ENCODE measurements at regions of chr10 and their contacts with region 1.

Region 1: GRCh38 chr10:38010119-38010903 is at the start of gene ZNF33A:
- DNase-seq: peak; percentile 94 to 96
- H3K4me3 ChIP-seq: peak within 1 kb of the TSS; percentile 50
- H3K4me3 Mint-ChIP-seq: peak within 1 kb of the TSS; percentile 88
- H3K27ac Mint-ChIP-seq: peak within 1 kb of the TSS; percentile 97
- H3K4me1 ChIP-seq: no peaks in the 10 kb centered on the region
- H3K4me1 Mint-ChIP-seq: peaks cover 7% of the 10 kb centered on the region
- H3K27me3 ChIP-seq: no peaks in the 10 kb centered on the region
- H3K27me3 Mint-ChIP-seq: no peaks in the 10 kb centered on the region
- CTCF ChIP-seq: peak in 1 of 2 experiments; percentile 30
- total RNA-seq, gene ZNF33A: 33.9 and 36.3 TPM in 2 replicates

Region 2: DNA sequence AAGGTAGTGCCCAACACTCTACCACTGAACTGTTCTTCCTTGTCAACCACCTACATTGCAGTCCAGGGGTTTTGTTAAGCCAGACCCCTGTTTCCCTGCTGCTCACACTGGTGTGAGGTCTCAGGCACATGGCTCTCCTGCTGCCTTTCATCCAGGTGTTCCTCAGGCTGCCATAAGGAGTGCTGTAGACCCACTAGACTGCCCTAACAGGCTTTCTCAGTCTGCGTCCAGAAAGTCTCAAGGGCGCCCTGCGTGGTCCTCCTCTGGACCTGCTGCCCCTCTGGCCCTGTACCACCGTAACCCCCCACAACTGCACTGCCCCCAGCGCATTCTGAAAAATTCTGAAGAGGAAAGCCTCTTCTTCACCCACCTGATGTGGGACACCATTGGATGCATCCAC is 1110.7 kb before region 1 on chr10:
- CTCF ChIA-PET with region 1: no interaction called
- POLR2A ChIA-PET with region 1: no interaction called
- intact Hi-C with region 1: loop called (anchors 10 kb)
- DNase-seq: no peak
- H3K4me3 ChIP-seq: no peak overlapping the region
- H3K4me3 Mint-ChIP-seq: no peak overlapping the region
- H3K27ac Mint-ChIP-seq: no peak overlapping the region
- H3K4me1 ChIP-seq: no peaks in the 10 kb centered on the region
- H3K4me1 Mint-ChIP-seq: no peaks in the 10 kb centered on the region
- H3K27me3 ChIP-seq: no peaks in the 10 kb centered on the region
- H3K27me3 Mint-ChIP-seq: no peaks in the 10 kb centered on the region
- CTCF ChIP-seq: no peak

Region 3: DNA sequence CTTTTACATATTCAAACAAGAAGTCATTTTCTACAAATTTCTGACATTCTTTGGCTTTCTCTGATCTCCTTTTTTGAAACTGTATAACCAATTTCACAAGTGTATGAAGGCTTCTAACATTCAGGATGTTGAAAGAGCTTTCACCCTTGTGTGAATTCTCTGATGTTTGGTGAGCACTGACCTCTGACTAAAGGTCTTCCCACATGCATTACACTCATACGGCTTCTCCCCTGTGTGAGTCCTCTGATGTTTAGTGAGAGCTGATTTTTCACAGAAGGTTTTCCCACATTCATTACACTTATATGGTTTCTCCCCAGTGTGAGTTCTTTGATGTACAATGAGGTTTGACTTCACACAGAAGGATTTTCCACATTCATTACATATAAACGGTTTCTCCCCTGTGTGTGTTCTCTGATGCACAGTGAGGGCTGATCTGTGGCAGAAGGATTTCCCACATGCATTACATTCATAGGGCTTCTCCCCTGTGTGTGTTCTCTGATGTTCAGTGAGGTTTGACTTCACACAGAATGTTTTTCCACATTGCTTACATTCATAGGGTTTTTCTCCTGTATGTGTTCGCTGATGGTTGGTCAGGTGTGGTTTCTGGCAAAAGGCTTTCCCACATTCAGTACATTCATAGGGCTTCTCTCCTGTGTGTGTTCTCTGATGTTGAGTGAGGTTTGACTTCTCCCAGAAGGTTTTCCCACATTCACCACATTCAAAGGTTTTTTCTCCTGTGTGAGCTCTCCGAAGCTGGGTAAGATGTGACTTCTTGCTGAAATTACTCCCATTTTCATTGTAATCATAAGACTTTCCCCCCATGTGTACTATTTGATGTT is 178.6 kb before region 1 on chr10:
- CTCF ChIA-PET with region 1: no interaction called
- POLR2A ChIA-PET with region 1: interaction called, 18 read pairs
- intact Hi-C with region 1: no loop called
- DNase-seq: no peak
- H3K4me3 ChIP-seq: no peak overlapping the region
- H3K4me3 Mint-ChIP-seq: no peak overlapping the region
- H3K27ac Mint-ChIP-seq: no peak overlapping the region
- H3K4me1 ChIP-seq: no peaks in the 10 kb centered on the region
- H3K4me1 Mint-ChIP-seq: no peaks in the 10 kb centered on the region
- H3K27me3 ChIP-seq: no peaks in the 10 kb centered on the region
- H3K27me3 Mint-ChIP-seq: no peaks in the 10 kb centered on the region
- CTCF ChIP-seq: no peak

Region 4: DNA sequence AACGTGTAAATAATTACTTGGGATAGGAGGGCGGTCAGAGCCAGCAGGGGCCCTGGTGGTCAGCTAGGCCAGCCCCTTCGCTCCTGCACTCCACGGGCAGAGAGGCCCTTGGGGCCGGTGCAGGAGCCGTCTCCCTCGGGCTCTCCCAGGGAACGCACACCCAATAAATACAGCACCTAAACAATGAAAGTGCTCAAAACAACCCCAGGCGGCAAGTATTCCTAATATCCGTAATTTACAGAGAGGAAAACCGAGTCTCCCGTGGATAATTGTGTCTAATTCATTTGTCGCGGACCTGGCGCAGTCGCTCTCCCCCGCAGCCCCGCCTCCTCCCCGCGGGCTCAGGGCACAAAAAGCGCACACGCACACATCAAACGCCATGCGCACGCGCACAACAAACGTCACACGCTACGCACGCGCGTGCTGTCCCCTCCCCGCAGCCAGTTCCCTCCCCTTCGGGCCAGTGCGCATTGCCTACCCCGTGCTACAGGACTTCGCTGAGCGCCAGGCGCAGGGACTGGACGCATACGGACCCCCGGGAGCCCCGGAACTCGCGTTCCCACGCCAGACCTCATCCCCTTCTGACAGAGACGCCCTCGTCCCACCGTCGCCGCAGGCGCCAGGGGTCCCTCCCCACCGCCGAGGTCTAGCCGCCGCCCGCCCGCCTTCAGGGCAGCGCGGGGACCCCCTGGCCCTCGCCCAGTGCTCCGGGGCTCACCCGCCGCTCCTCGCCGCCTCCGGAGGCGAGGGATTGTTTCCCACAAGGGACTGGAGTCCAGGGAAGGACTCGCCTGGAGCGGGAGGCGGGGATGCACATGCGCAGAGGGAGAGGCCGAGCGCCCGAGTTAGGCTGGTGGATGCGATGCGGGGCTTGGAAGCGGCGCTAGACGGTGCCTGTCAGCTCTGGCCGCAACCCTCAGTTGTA is 152.8 kb before region 1 on chr10 and contains the start of gene ZNF248:
- CTCF ChIA-PET with region 1: interaction called, 6 read pairs
- POLR2A ChIA-PET with region 1: no interaction called
- intact Hi-C with region 1: loop called (anchors 1 kb)
- DNase-seq: peak; percentile 98
- H3K4me3 ChIP-seq: peak within 1 kb of the TSS; percentile 71
- H3K4me3 Mint-ChIP-seq: peak within 1 kb of the TSS; percentile 94
- H3K27ac Mint-ChIP-seq: peak within 1 kb of the TSS; percentile 90
- H3K4me1 ChIP-seq: peaks cover 14% of the 10 kb centered on the region; the same call in 1 of the 2 replicates
- H3K4me1 Mint-ChIP-seq: peaks cover 27% of the 10 kb centered on the region
- H3K27me3 ChIP-seq: no peaks in the 10 kb centered on the region
- H3K27me3 Mint-ChIP-seq: no peaks in the 10 kb centered on the region
- CTCF ChIP-seq: peak in 1 of 2 experiments; percentile 29
- total RNA-seq, gene ZNF248: 16.7 and 17.6 TPM in 2 replicates

Region 5: GRCh38 chr10:37976091-37976879 is 34.0 kb before region 1 on chr10 and contains the start of gene ZNF25:
- CTCF ChIA-PET with region 1: interaction called, 14 read pairs
- POLR2A ChIA-PET with region 1: interaction called, 4 read pairs
- intact Hi-C with region 1: loop called (anchors 1 kb)
- DNase-seq: peak; percentile 100
- H3K4me3 ChIP-seq: peak within 1 kb of the TSS; percentile 89
- H3K4me3 Mint-ChIP-seq: peak within 1 kb of the TSS; percentile 81
- H3K27ac Mint-ChIP-seq: peak within 1 kb of the TSS; percentile 94
- H3K4me1 ChIP-seq: no peaks in the 10 kb centered on the region
- H3K4me1 Mint-ChIP-seq: peaks cover 7% of the 10 kb centered on the region
- H3K27me3 ChIP-seq: no peaks in the 10 kb centered on the region
- H3K27me3 Mint-ChIP-seq: no peaks in the 10 kb centered on the region
- CTCF ChIP-seq: peak; percentile 94 to 99
- total RNA-seq, gene ZNF25: 1.5 and 1.7 TPM in 2 replicates

Region 6: GRCh38 chr10:38054361-38054797 is 44.1 kb after region 1 on chr10:
- CTCF ChIA-PET with region 1: no interaction called
- POLR2A ChIA-PET with region 1: no interaction called
- intact Hi-C with region 1: no loop called
- DNase-seq: no peak
- H3K4me3 ChIP-seq: no peak overlapping the region
- H3K4me3 Mint-ChIP-seq: no peak overlapping the region
- H3K27ac Mint-ChIP-seq: no peak overlapping the region
- H3K4me1 ChIP-seq: no peaks in the 10 kb centered on the region
- H3K4me1 Mint-ChIP-seq: no peaks in the 10 kb centered on the region
- H3K27me3 ChIP-seq: no peaks in the 10 kb centered on the region
- H3K27me3 Mint-ChIP-seq: no peaks in the 10 kb centered on the region
- CTCF ChIP-seq: no peak

Region 7: DNA sequence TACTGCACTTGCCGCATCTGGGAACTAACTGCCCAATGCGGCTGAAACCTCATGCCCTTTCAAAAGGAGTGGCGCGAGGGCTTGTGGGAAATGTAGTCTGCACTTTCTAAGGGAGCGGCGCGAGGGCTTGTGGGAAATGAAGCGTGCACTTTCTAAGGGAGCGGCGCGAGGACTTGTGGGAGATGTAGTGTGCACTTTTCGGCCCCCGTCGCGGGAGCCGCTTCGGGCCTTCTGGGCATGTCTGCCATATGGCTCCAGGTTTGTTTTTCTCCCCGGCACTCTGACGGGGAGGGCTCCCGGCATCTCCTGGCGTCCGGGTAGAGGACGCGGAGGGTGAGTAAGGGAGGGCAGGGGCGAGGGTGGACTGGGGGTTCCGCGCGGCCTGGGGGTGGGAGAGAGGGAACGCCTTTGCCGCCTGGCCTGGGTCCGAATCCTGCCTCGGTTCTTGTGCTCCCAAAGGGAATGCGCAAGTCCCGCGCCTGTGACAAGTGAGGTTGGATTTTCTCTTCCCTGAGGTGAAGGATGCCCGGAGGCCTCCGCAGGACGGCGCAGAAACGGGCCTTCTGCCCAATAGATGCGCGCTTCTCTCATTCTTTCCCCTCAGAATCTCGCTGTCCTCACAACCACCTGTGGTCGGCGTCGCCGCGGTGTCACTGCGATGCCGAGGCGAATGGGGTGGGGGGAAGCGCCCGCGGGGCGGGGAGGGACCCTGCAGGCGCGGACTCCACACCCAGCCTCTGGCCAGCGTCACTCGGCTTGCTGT is 84.0 kb after region 1 on chr10 and contains the start of gene ZNF37A:
- CTCF ChIA-PET with region 1: no interaction called
- POLR2A ChIA-PET with region 1: interaction called, 3 read pairs
- intact Hi-C with region 1: loop called (anchors 1 kb)
- DNase-seq: peak; percentile 93 to 96
- H3K4me3 ChIP-seq: peak within 1 kb of the TSS; percentile 99
- H3K4me3 Mint-ChIP-seq: peak within 1 kb of the TSS; percentile 86
- H3K27ac Mint-ChIP-seq: peak within 1 kb of the TSS; percentile 88
- H3K4me1 ChIP-seq: peaks cover 9% of the 10 kb centered on the region; the same call in 1 of the 2 replicates
- H3K4me1 Mint-ChIP-seq: peaks cover 7% of the 10 kb centered on the region
- H3K27me3 ChIP-seq: no peaks in the 10 kb centered on the region
- H3K27me3 Mint-ChIP-seq: no peaks in the 10 kb centered on the region
- CTCF ChIP-seq: no peak
- total RNA-seq, gene ZNF37A: 14.0 and 15.1 TPM in 2 replicates

Measured in Caco-2 (cell line).